ENCODE measurements at regions of chr1 and their contacts with region 1.

Region 1: GRCh38 chr1:27284425-27285273 is 37.3 kb upstream of the TMEM222 start:
- DNase-seq: peak; percentile 56 to 67
- ATAC-seq: peak; percentile 73 to 76
- H3K4me3 ChIP-seq: no peak overlapping the region
- H3K27ac ChIP-seq: no peak overlapping the region
- H3K4me1 ChIP-seq: no peaks in the 10 kb centered on the region
- H3K27me3 ChIP-seq: no peaks in the 10 kb centered on the region
- CTCF ChIP-seq: peak; percentile 72 to 87 (median 76)
- POLR2A ChIP-seq: no peak

Region 2: DNA sequence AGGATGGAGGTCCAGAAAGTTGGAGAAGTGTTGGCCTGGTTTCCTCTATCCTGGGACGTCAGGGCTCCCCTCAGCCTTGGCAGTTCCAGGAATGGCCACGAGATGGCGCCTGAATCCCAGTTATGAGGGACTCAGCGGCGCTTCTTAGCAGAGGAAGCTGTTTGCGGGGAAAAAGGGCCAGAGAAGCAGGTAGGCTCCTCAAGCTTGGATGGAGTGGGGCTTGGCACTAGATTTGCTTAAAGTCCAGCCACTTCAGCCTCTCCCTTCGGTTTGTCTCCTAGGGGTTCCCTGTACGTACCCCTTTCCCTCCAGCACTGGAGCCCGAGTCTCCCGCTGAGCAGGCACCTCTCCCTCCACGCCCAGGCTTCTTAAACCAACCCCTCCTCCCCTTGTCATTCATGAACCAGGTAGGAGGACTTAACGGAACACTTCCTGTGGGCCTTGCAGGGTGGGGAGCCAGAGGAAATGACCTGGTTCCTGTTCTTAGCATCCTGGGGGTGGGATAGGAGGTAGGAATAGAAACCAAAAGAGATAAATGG is 240.0 kb before region 1 on chr1:
- in situ Hi-C with region 1: no loop called
- intact Hi-C with region 1: loop called (anchors 5 kb)
- DNase-seq: peak; percentile 69 to 71
- ATAC-seq: peak; percentile 74 to 89
- H3K4me3 ChIP-seq: peak overlapping the region; percentile 14 to 34 (median 18)
- H3K27ac ChIP-seq: no peak overlapping the region
- H3K4me1 ChIP-seq: peaks cover 3% of the 10 kb centered on the region in 2 donors
- H3K27me3 ChIP-seq: no peaks in the 10 kb centered on the region
- CTCF ChIP-seq: peak; percentile 93 to 98 (median 94)
- POLR2A ChIP-seq: no peak

Region 3: GRCh38 chr1:27102707-27103491 is 181.8 kb before region 1 on chr1:
- in situ Hi-C with region 1: loop called (anchors 5 to 10 kb)
- intact Hi-C with region 1: loop called (anchors 1 kb)
- DNase-seq: peak in 1 of 2 donors; percentile 65
- ATAC-seq: peak; percentile 49 to 77
- H3K4me3 ChIP-seq: no peak overlapping the region
- H3K27ac ChIP-seq: no peak overlapping the region
- H3K4me1 ChIP-seq: peaks cover 0 to 6% of the 10 kb centered on the region in 2 donors
- H3K27me3 ChIP-seq: no peaks in the 10 kb centered on the region
- CTCF ChIP-seq: peak; percentile 93 to 99 (median 98)
- POLR2A ChIP-seq: no peak

Region 4: DNA sequence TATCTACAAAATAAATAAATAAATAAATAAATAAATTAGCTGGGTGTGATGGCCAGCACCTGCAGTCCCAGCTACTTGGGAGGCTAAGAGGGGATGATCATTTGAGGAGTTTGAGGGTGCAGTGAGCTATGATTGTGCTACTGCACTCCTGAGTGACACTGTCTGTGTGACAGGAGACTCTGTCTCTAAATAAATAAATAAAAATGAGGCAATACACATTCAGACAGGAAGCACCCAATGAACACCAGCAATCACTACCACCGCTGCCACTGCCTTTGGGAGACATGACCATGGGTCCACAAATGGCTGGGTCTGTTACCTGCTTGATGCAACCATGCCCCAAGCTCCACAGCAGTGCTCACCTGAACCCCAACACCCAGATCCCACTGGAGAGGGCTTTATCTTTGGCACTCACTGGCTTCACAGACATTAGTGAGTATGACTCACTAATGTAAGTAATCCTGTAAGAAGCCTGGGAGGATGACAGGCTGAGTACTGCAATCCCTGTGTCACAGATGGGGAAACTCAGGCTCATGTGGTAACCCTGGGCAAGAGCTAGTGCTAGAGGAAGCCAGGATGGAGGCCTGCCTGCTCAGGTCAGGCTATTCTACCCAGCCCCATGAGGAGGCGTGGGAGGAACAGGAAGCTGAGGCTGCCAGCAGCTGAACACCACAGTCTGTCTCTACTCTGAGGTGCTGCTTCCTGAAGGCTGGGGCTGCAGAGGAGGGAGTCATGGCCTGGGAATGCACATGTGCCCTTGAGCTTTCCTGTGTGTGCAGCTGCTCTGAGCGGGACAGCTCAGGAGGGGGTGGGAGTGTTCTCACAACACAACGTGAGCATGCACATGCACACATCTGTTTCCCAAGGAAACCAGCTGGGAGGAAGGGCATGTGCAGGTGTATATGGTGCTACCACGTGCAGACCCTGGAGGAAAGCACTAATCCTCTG is 172.7 kb before region 1 on chr1:
- in situ Hi-C with region 1: loop called (anchors 5 to 10 kb)
- intact Hi-C with region 1: no loop called
- DNase-seq: peak; percentile 90 to 97
- ATAC-seq: peak; percentile 95
- H3K4me3 ChIP-seq: no peak overlapping the region
- H3K27ac ChIP-seq: peak overlapping the region; percentile 71 to 83 (median 78)
- H3K4me1 ChIP-seq: peaks cover 29 to 36% of the 10 kb centered on the region in 2 donors
- H3K27me3 ChIP-seq: no peaks in the 10 kb centered on the region
- CTCF ChIP-seq: peak; percentile 12 to 53 (median 37)
- POLR2A ChIP-seq: no peak

Region 5: DNA sequence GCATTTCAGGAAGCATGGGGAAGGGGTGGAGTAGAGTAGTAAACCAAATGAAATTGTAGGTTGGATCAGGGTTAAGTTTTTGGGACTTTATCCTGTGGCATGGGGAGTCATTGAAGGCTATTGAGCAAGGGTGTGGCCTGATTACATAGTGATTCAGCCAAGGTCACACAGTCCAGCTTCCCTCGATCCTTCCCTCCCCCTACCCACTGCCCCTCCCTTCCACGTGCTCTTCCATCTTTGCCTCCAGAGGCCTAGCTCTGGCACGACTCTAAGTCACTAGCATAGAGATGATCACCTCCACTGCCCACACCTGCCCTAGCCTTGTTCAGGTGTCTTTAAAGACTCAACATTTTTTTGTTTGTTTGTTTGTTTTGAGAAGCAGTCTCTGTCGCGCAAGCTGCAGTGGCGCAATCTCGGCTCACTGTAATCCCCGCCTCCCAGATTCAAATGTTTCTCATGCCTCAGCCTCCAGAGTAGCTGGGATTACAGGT is 92.6 kb before region 1 on chr1:
- in situ Hi-C with region 1: loop called in 1 of 4 experiments (anchors 10 kb)
- intact Hi-C with region 1: loop called (anchors 5 kb)
- DNase-seq: no peak
- ATAC-seq: no peak
- H3K4me3 ChIP-seq: no peak overlapping the region
- H3K27ac ChIP-seq: no peak overlapping the region
- H3K4me1 ChIP-seq: no peaks in the 10 kb centered on the region
- H3K27me3 ChIP-seq: no peaks in the 10 kb centered on the region
- CTCF ChIP-seq: no peak
- POLR2A ChIP-seq: no peak

Measured in gastrocnemius medialis (tissue), 4 donors.